Spleen (tissue), 13 donors: ENCODE measurements at regions of chrX and their contacts with region 1.

Region 1: GRCh38 chrX:12814420-12814819 is 23.2 kb downstream of the PRPS2 start:
- DNase-seq: no peak
- H3K4me3 ChIP-seq: no peak overlapping the region
- H3K27ac ChIP-seq: no peak overlapping the region
- H3K4me1 ChIP-seq: peaks cover 0 to 8% (median 0%) of the 10 kb centered on the region in 6 donors
- H3K27me3 ChIP-seq: no peaks in the 10 kb centered on the region
- CTCF ChIP-seq: peak; percentile 22 to 60 (median 48)
- POLR2A ChIP-seq: no peak

Region 2: GRCh38 chrX:12894074-12895030 is 79.9 kb after region 1 on chrX:
- intact Hi-C with region 1: loop called (anchors 10 kb)
- DNase-seq: peak; percentile 79
- H3K4me3 ChIP-seq: no peak overlapping the region
- H3K27ac ChIP-seq: no peak overlapping the region
- H3K4me1 ChIP-seq: peaks cover 0 to 60% (median 24%) of the 10 kb centered on the region in 6 donors
- H3K27me3 ChIP-seq: peaks cover 0 to under 1% (median 0%) of the 10 kb centered on the region in 7 donors
- CTCF ChIP-seq: peak in 10 of 11 experiments; percentile 26 to 68 (median 56)
- POLR2A ChIP-seq: no peak

Region 3: GRCh38 chrX:13051529-13052172 is 237.2 kb after region 1 on chrX:
- intact Hi-C with region 1: no loop called
- DNase-seq: no peak
- H3K4me3 ChIP-seq: no peak overlapping the region
- H3K27ac ChIP-seq: peak overlapping the region; percentile 44 to 79 (median 71)
- H3K4me1 ChIP-seq: peaks cover 0 to 46% (median 20%) of the 10 kb centered on the region in 6 donors
- H3K27me3 ChIP-seq: peaks cover 0 to 4% (median 0%) of the 10 kb centered on the region in 7 donors
- CTCF ChIP-seq: no peak
- POLR2A ChIP-seq: no peak